AG04450 (cell line): ENCODE measurements at regions of chr5 and their contacts with region 1.

Region 1: GRCh38 chr5:160199410-160199911 is 29.8 kb upstream of the FABP6 start:
- DNase-seq: no peak
- H3K4me3 ChIP-seq: peak overlapping the region; percentile 57
- H3K27ac ChIP-seq: no peak overlapping the region
- H3K27me3 ChIP-seq: no peaks in the 10 kb centered on the region
- CTCF ChIP-seq: peak; percentile 64

Region 2: DNA sequence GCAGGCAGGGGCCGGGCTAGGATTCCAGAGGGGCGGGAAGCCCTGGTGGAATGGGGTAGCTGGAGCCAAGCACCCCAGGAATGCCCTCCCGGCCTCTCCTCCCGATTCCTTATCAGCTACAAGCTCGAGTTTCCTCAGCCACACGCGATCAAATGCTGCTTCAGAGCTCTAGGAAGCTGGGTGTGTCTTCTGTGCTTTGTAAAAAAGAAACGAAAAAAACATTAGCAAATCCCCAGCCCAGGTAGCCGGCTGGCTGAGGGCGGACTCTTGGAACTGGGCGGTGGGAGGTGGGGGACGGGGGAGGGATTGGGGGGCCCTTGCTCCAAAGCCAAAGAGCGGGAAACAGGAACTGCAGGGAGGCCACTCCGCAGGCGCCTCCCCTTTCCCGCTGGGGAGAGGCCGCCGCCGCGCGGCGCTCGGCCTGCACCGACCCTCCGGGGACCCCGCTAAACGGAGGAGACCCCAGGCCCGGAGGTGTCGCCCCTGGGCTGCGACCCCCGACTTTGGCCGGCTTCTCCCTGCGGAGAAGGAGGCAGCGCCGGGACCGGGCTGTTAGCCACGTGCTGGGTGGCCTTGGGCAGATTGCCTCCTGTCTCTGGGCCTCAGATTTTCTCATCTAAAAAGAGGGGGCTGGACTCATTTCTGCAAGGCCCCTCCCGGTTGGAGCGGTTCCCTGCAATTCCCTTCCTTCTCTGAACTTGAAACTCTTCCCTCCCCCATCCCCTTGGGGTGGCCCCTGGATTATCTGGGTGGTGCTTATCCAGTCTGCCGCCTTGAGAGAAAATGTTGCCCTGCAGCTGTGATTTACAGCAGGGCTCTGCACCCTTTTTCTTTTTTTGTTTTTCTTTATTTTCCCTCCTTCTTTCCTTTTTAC is 11.1 kb before region 1 on chr5:
- CTCF ChIA-PET with region 1: interaction called, 26 read pairs
- POLR2A ChIA-PET with region 1: no interaction called
- DNase-seq: no peak
- H3K4me3 ChIP-seq: peak overlapping the region; percentile 47
- H3K27ac ChIP-seq: peak overlapping the region; percentile 31
- H3K27me3 ChIP-seq: no peaks in the 10 kb centered on the region
- CTCF ChIP-seq: no peak

Region 3: DNA sequence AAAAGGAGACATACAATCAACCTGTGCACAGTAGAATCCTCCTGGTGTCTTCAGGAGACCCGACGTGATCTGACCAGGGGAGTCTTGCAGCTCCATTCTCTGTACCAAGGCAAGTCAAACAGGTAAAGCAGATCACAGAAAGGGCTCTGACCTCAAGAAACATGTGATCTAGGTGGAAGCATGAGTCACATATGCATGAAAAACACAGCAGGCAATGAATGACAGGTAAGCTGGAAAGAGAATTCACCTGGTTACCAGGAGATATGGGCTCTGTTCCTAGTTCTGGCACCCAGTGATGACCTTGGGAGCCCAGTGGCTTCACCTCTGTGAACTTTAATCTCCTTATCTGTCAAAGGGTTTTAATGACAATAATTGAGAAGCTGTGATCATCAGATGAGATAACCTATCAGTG is 10.5 kb after region 1 on chr5:
- CTCF ChIA-PET with region 1: interaction called, 25 read pairs
- POLR2A ChIA-PET with region 1: interaction called, 3 read pairs
- DNase-seq: no peak
- H3K4me3 ChIP-seq: no peak overlapping the region
- H3K27ac ChIP-seq: no peak overlapping the region
- H3K27me3 ChIP-seq: peaks cover 4% of the 10 kb centered on the region
- CTCF ChIP-seq: no peak

Region 4: GRCh38 chr5:160342403-160342941 is 143.0 kb after region 1 on chr5:
- CTCF ChIA-PET with region 1: interaction called, 73 read pairs
- POLR2A ChIA-PET with region 1: no interaction called
- DNase-seq: no peak
- H3K4me3 ChIP-seq: no peak overlapping the region
- H3K27ac ChIP-seq: no peak overlapping the region
- H3K27me3 ChIP-seq: no peaks in the 10 kb centered on the region
- CTCF ChIP-seq: no peak

Region 5: DNA sequence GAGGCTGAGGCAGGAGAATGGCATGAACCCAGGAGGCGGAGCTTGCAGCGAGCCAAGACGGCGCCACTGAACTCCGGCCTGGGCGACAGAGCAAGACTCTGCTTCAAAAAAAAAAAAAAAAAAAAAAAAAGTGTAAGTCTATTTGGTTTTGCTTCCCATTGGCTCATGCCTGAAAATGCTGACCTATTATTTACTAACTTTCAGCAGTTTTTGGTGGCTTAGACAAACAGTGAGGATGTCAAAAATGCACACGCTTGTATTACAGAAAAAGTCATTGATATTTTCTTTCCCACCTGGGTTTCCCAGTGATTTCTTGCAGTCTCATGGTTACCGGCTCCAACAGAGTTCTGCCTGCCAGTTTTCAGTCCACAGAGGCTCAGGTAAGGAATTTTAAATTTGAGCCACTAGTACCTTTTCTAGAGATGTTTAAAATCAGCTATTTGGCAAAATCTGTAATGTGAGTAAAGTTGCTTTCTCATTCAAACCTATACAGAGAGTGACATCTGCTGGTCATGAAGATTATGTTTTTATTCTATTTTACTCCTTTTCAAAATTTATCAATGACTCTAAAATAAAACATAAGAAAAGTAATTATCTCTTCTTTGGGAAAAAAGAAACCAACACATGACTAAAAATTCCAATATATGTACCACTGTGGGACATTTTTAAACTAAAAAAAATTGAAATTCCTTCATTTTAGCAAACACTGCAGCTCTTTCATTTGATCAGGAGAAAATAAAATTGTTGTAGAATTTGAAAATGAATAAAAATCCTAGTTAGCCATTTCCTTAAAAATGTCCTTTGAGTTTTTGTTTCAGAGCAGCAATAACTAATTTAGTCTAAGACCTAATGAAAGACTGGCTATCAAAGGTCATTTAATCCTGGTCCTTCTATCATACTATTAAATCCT is 191.6 kb after region 1 on chr5:
- CTCF ChIA-PET with region 1: interaction called, 34 read pairs
- POLR2A ChIA-PET with region 1: no interaction called
- DNase-seq: no peak
- H3K4me3 ChIP-seq: no peak overlapping the region
- H3K27ac ChIP-seq: no peak overlapping the region
- H3K27me3 ChIP-seq: no peaks in the 10 kb centered on the region
- CTCF ChIP-seq: peak; percentile 56